ENCODE measurements at regions of chr5 and their contacts with region 1.

Region 1: GRCh38 chr5:95822542-95823181 is at the start of gene GLRX:
- DNase-seq: peak in 8 of 9 experiments; percentile 42 to 75 (median 60)
- ATAC-seq: peak; percentile 39
- H3K4me3 ChIP-seq: peak within 1 kb of the TSS; percentile 89 to 91
- H3K4me3 Mint-ChIP-seq: peak within 1 kb of the TSS; percentile 98
- H3K27ac ChIP-seq: peak within 1 kb of the TSS; percentile 65 to 84
- H3K27ac Mint-ChIP-seq: peak within 1 kb of the TSS; percentile 96
- H3K4me1 ChIP-seq: peaks cover 52% of the 10 kb centered on the region
- H3K4me1 Mint-ChIP-seq: peaks cover 66% of the 10 kb centered on the region
- H3K27me3 ChIP-seq: no peaks in the 10 kb centered on the region
- H3K27me3 Mint-ChIP-seq: no peaks in the 10 kb centered on the region
- CTCF ChIP-seq: no peak
- total RNA-seq, gene GLRX: 17.9 to 19.5 TPM

Region 2: GRCh38 chr5:95808686-95809413 is 13.8 kb before region 1 on chr5:
- CTCF ChIA-PET with region 1: interaction called, 22 read pairs
- POLR2A ChIA-PET with region 1: interaction called, 63 read pairs
- intact Hi-C with region 1: loop called (anchors 1 kb)
- DNase-seq: peak; percentile 54 to 95 (median 79)
- ATAC-seq: peak; percentile 99
- H3K4me3 ChIP-seq: peak overlapping the region in 1 of 2 experiments; percentile 9
- H3K4me3 Mint-ChIP-seq: peak overlapping the region; percentile 70
- H3K27ac ChIP-seq: peak overlapping the region; percentile 5 to 61
- H3K27ac Mint-ChIP-seq: peak overlapping the region; percentile 80
- H3K4me1 ChIP-seq: peaks cover 60% of the 10 kb centered on the region
- H3K4me1 Mint-ChIP-seq: peaks cover 58% of the 10 kb centered on the region
- H3K27me3 ChIP-seq: no peaks in the 10 kb centered on the region
- H3K27me3 Mint-ChIP-seq: no peaks in the 10 kb centered on the region
- CTCF ChIP-seq: no peak

Region 3: GRCh38 chr5:95835682-95836385 is 13.2 kb after region 1 on chr5:
- CTCF ChIA-PET with region 1: interaction called, 32 read pairs
- POLR2A ChIA-PET with region 1: interaction called, 69 read pairs
- intact Hi-C with region 1: loop called (anchors 1 to 2 kb)
- DNase-seq: peak in 5 of 9 experiments; percentile 43 to 68 (median 50)
- ATAC-seq: peak; percentile 26
- H3K4me3 ChIP-seq: peak overlapping the region; percentile 80 to 94
- H3K4me3 Mint-ChIP-seq: peak overlapping the region; percentile 82
- H3K27ac ChIP-seq: peak overlapping the region; percentile 39 to 82
- H3K27ac Mint-ChIP-seq: peak overlapping the region; percentile 88
- H3K4me1 ChIP-seq: peaks cover 30% of the 10 kb centered on the region
- H3K4me1 Mint-ChIP-seq: peaks cover 52% of the 10 kb centered on the region
- H3K27me3 ChIP-seq: no peaks in the 10 kb centered on the region
- H3K27me3 Mint-ChIP-seq: no peaks in the 10 kb centered on the region
- CTCF ChIP-seq: no peak

Region 4: GRCh38 chr5:95870105-95870672 is 47.5 kb after region 1 on chr5:
- CTCF ChIA-PET with region 1: no interaction called
- POLR2A ChIA-PET with region 1: no interaction called
- intact Hi-C with region 1: loop called in 1 of 2 experiments (anchors 2 kb)
- DNase-seq: peak in 1 of 9 experiments; percentile 35
- ATAC-seq: peak; percentile 33
- H3K4me3 ChIP-seq: no peak overlapping the region
- H3K4me3 Mint-ChIP-seq: peak overlapping the region; percentile 53
- H3K27ac ChIP-seq: no peak overlapping the region
- H3K27ac Mint-ChIP-seq: no peak overlapping the region
- H3K4me1 ChIP-seq: peaks cover 32% of the 10 kb centered on the region
- H3K4me1 Mint-ChIP-seq: peaks cover 31% of the 10 kb centered on the region
- H3K27me3 ChIP-seq: no peaks in the 10 kb centered on the region
- H3K27me3 Mint-ChIP-seq: no peaks in the 10 kb centered on the region
- CTCF ChIP-seq: no peak

Region 5: GRCh38 chr5:96408276-96408777 is 585.7 kb after region 1 on chr5:
- CTCF ChIA-PET with region 1: no interaction called
- POLR2A ChIA-PET with region 1: no interaction called
- intact Hi-C with region 1: no loop called
- DNase-seq: no peak
- ATAC-seq: no peak
- H3K4me3 ChIP-seq: no peak overlapping the region
- H3K4me3 Mint-ChIP-seq: no peak overlapping the region
- H3K27ac ChIP-seq: no peak overlapping the region
- H3K27ac Mint-ChIP-seq: no peak overlapping the region
- H3K4me1 ChIP-seq: no peaks in the 10 kb centered on the region
- H3K4me1 Mint-ChIP-seq: no peaks in the 10 kb centered on the region
- H3K27me3 ChIP-seq: no peaks in the 10 kb centered on the region
- H3K27me3 Mint-ChIP-seq: peaks cover 2% of the 10 kb centered on the region
- CTCF ChIP-seq: no peak

Region 6: GRCh38 chr5:96924016-96924443 is 1101.4 kb after region 1 on chr5:
- CTCF ChIA-PET with region 1: no interaction called
- POLR2A ChIA-PET with region 1: no interaction called
- intact Hi-C with region 1: loop called in 1 of 2 experiments (anchors 5 kb)
- DNase-seq: peak in 7 of 9 experiments; percentile 13 to 73 (median 49)
- ATAC-seq: peak; percentile 94
- H3K4me3 ChIP-seq: no peak overlapping the region
- H3K4me3 Mint-ChIP-seq: peak overlapping the region; percentile 23
- H3K27ac ChIP-seq: peak overlapping the region in 1 of 2 experiments; percentile 51
- H3K27ac Mint-ChIP-seq: peak overlapping the region; percentile 92
- H3K4me1 ChIP-seq: peaks cover 38% of the 10 kb centered on the region
- H3K4me1 Mint-ChIP-seq: peaks cover 63% of the 10 kb centered on the region
- H3K27me3 ChIP-seq: no peaks in the 10 kb centered on the region
- H3K27me3 Mint-ChIP-seq: no peaks in the 10 kb centered on the region
- CTCF ChIP-seq: no peak

Region 7: DNA sequence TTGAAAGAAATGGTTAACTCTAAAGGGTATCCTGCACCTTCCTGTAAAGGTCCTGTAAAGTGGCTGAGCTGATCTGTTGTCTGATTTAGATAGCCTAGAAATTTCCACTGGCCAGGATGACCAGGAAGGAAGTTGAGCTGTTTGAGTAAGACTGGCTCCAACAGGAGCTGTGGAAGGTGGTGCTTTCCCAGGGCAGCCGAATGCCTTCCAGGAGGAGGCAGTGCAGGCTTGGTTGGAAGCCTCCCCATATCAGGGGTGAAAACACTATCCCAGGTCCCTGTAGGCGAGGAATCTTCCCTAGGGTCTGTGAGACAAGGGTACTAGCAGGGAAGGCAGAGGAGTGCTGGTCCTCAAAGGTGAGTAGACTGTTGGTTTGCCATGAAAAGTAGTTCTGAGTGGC is 1221.4 kb after region 1 on chr5:
- CTCF ChIA-PET with region 1: no interaction called
- POLR2A ChIA-PET with region 1: no interaction called
- intact Hi-C with region 1: no loop called
- DNase-seq: no peak
- ATAC-seq: no peak
- H3K4me3 ChIP-seq: no peak overlapping the region
- H3K4me3 Mint-ChIP-seq: no peak overlapping the region
- H3K27ac ChIP-seq: no peak overlapping the region
- H3K27ac Mint-ChIP-seq: no peak overlapping the region
- H3K4me1 ChIP-seq: no peaks in the 10 kb centered on the region
- H3K4me1 Mint-ChIP-seq: no peaks in the 10 kb centered on the region
- H3K27me3 ChIP-seq: no peaks in the 10 kb centered on the region
- H3K27me3 Mint-ChIP-seq: no peaks in the 10 kb centered on the region
- CTCF ChIP-seq: no peak